Vagina (tissue), 2 donors: ENCODE measurements at regions of chr7 and their contacts with region 1.

Region 1: DNA sequence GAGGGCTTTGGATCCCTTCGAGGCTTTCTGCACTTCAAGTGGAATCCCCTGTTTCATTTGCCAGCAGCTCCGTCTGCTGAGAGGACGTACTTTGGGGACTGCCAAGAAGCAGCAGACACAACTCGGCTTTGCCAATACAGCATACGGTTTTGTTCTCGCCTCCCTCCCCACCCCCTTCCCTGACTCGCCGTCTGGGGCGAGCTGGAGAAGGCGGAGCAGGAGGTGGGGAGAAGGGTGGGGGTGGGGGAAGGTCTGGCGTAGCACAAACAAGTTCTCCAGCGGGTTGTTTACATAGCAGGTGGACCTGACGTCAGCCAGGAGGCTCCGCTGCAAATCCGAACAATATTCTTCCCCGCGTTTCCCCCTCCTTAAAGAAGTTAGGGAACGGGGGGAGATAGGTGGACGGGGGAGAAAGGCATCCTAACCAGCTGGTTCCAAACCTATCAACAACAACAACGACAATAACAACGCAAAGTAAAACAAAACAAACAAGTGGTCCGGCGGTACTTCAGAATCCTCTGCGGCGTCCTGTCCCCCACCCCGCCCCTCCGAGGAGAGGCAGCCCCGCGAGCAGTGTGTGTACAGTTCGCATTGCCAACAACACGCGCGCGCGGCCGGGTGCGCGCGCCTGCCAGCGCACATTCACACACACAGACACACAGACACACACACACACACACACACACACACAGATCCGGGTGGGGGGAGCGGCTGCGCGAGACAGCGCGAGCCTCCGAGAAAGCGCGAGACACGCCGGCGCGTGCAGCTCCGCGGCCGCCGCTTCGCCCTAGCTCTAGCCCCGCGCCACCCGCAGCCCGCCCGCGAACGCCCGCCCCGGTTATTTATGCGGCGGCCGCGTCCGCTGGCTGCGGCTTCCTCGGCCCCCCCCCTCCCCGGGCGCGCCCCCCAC is 167.0 kb upstream of the PPP1R3A start:
- DNase-seq: peak in 1 of 2 donors; percentile 95
- H3K4me3 ChIP-seq: peak overlapping the region; percentile 68 to 77
- H3K27ac ChIP-seq: peak overlapping the region; percentile 96
- H3K4me1 ChIP-seq: peaks cover 9% of the 10 kb centered on the region
- H3K27me3 ChIP-seq: no peaks in the 10 kb centered on the region
- CTCF ChIP-seq: no peak
- POLR2A ChIP-seq: peak in 1 of 2 donors; percentile 26

Region 2: GRCh38 chr7:113968713-113969112 is 117.1 kb before region 1 on chr7:
- intact Hi-C with region 1: no loop called
- DNase-seq: no peak
- H3K4me3 ChIP-seq: no peak overlapping the region
- H3K27ac ChIP-seq: no peak overlapping the region
- H3K4me1 ChIP-seq: no peaks in the 10 kb centered on the region
- H3K27me3 ChIP-seq: no peaks in the 10 kb centered on the region
- CTCF ChIP-seq: no peak
- POLR2A ChIP-seq: no peak

Region 3: GRCh38 chr7:114243019-114243507 is 157.2 kb after region 1 on chr7:
- intact Hi-C with region 1: no loop called
- DNase-seq: no peak
- H3K4me3 ChIP-seq: no peak overlapping the region
- H3K27ac ChIP-seq: no peak overlapping the region
- H3K4me1 ChIP-seq: no peaks in the 10 kb centered on the region
- H3K27me3 ChIP-seq: no peaks in the 10 kb centered on the region
- CTCF ChIP-seq: no peak
- POLR2A ChIP-seq: no peak

Region 4: DNA sequence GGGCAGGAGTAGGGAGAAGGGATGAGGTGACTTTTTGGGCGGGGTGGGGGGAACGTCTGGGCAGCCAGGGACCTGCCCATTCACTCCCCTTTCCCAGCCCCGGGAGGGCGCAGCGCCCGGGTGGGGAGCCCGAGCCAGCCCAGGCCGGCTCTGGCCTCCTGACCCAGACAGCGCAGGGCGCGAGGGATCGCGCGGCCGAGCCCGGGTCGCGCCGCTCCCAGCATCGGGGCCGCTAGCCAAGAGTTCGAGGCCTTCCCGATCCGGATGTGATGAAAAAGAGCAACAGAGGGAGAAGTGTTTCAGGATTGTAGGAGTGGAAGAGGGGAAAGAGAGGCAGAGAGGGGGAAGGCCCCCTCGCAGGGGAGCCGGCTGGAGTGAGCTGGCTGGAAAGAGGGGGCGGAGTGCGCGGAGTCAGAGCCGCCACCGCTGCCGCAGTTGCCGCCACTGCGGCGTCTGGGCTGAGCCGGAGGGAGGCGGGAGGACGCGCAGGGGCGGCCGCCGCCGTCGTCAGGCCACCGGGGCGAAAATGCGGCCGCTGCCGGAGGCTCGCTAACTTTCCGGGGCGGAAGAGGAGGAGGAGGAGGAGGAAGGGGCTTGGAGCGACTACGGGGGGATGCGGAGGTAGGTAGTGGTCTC is 836.3 kb after region 1 on chr7 and contains the start of gene MDFIC:
- intact Hi-C with region 1: loop called (anchors 10 kb)
- DNase-seq: no peak
- H3K4me3 ChIP-seq: peak within 1 kb of the TSS; percentile 58 to 90
- H3K27ac ChIP-seq: peak within 1 kb of the TSS; percentile 92
- H3K4me1 ChIP-seq: peaks cover 24% of the 10 kb centered on the region
- H3K27me3 ChIP-seq: no peaks in the 10 kb centered on the region
- CTCF ChIP-seq: no peak
- POLR2A ChIP-seq: no peak
- total RNA-seq, gene MDFIC: 27.7 TPM

Region 5: DNA sequence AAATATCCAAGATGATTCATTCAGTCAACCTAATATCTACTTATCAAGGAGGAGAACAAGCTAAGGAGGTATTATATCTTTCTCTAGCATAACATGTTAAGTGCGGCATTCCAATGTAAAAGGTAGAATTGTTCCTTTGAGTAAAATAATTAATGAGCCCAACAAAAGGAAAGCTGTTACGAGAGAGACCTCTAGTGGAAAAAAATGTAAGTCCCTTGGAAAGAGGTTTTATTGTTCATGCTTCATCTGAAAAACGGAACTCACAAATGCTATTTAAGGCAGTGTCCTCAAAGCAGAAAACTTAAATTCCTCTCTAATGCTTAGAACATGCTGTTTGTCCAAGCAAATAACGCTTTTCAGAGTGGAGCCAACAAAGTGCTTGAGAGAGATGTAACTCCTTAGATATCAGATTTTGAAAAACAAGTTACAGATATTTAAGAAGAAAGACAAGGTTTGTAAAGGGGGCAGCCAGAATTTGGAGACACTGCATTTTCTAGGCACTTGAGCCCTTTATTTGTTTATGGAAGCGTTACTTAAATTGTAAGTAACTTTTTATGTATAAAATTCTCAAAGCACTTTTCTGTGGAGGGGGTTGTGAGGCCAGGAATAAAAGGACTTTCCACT is 1824.8 kb after region 1 on chr7:
- intact Hi-C with region 1: loop called (anchors 5 kb)
- DNase-seq: no peak
- H3K4me3 ChIP-seq: no peak overlapping the region
- H3K27ac ChIP-seq: no peak overlapping the region
- H3K4me1 ChIP-seq: no peaks in the 10 kb centered on the region
- H3K27me3 ChIP-seq: no peaks in the 10 kb centered on the region
- CTCF ChIP-seq: peak in 1 of 3 experiments; percentile 30
- POLR2A ChIP-seq: no peak